ENCODE measurements at regions of chr11 and their contacts with region 1.

Region 1: DNA sequence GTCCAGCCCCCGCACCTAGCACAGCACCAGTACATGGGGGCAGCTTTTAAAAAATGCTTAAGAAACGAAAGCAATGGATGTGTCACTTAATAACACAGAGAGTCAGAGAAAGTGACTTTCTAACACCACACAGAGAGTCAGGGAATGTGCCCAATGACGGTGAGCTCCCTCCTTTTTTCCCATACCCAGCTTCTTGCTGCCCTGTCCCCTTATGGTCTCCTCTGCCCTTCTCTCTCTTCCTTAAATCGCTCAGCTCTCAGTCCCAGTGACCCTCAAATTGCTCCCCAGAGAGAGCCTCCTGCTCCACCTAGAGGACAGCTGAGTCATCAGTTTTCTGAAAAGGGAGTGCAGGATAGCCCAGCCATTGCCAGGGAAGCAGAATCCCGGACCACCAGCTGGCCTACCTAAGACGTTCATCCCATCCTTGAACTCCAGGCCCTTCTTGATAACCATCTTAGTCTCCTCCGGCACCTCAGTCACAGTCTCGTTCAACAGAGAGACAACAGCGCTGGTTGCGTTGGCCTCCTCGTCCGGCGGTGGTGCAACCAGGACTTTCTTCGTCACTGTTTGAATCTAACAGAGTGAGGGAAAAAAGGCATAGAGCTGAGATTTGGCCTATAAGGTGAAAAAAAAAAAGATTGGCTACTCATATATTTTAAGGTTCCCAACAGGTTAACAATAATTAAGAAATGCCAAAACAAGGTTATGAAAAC is 113.5 kb downstream of the SLC1A2 start:
- DNase-seq: peak; percentile 58 to 66 (median 61)
- H3K4me3 ChIP-seq: peak overlapping the region in 1 of 7 experiments; percentile 48
- H3K27ac ChIP-seq: no peak overlapping the region
- H3K4me1 ChIP-seq: peaks cover 6 to 23% (median 14%) of the 10 kb centered on the region in 4 experiments
- H3K27me3 ChIP-seq: no peaks in the 10 kb centered on the region

Region 2: GRCh38 chr11:35260342-35260985 is 45.4 kb before region 1 on chr11:
- CTCF ChIA-PET with region 1: interaction called, 11 read pairs
- POLR2A ChIA-PET with region 1: no interaction called
- DNase-seq: peak in 2 of 3 donors; percentile 57 to 68
- H3K4me3 ChIP-seq: no peak overlapping the region
- H3K27ac ChIP-seq: no peak overlapping the region
- H3K4me1 ChIP-seq: peaks cover 2 to 19% (median 10%) of the 10 kb centered on the region in 4 experiments
- H3K27me3 ChIP-seq: no peaks in the 10 kb centered on the region

Region 3: DNA sequence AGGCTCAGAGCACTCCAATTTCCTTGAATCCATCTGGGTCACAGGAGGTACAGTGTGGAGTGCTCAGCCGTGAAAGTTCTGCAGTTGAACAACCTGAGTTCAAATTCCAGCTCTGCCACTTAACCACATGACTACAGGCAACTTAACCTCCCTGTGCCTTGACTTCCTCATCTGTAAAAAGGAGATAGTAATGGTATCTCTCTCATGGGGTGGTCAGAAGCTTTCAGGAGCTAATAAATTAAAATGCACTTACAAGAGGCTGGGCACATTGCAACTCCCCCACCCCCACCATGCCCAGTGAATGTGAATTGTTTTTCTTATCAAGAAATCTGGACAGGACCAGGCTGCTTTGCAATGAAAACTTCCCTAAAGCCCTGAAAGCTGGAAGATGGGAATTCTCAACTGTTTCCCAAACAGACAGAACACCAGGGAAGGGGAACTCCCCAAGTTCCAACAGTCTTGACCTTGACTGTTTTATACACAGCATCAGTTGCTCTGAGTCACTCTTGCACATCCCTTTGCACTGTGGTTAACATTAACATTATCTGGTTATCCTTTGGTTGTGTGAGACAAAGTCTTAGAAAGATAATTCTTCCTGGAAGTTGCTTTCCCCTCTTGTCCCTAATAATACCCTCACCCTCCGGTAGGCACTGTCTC is 23.5 kb before region 1 on chr11:
- CTCF ChIA-PET with region 1: interaction called, 20 read pairs
- POLR2A ChIA-PET with region 1: no interaction called
- DNase-seq: peak in 2 of 3 donors; percentile 31 to 42
- H3K4me3 ChIP-seq: no peak overlapping the region
- H3K27ac ChIP-seq: no peak overlapping the region
- H3K4me1 ChIP-seq: peaks cover 0 to 6% (median under 1%) of the 10 kb centered on the region in 4 experiments
- H3K27me3 ChIP-seq: no peaks in the 10 kb centered on the region

Region 4: DNA sequence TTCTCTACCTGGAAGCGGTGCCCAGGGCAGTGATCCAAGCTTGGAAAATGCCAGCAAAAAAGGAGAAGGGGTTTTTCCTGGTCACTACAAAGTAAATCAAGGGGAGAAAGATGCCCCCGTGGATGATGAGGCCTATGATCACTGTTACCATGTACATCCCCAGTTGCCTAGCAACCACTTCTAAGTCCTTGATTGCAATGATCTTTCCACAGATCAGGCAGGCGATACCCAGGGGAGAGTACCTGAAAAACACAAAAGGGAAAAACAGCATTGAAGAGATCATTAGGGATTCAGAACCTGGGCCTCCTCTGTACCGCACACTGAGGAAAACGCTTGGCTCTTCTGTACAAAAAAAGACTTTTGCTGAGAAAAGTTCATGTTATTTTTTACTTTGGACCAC is 13.5 kb before region 1 on chr11:
- CTCF ChIA-PET with region 1: interaction called, 48 read pairs
- POLR2A ChIA-PET with region 1: no interaction called
- DNase-seq: no peak
- H3K4me3 ChIP-seq: no peak overlapping the region
- H3K27ac ChIP-seq: no peak overlapping the region
- H3K4me1 ChIP-seq: peaks cover 0 to 14% (median 12%) of the 10 kb centered on the region in 4 experiments
- H3K27me3 ChIP-seq: no peaks in the 10 kb centered on the region

Region 5: DNA sequence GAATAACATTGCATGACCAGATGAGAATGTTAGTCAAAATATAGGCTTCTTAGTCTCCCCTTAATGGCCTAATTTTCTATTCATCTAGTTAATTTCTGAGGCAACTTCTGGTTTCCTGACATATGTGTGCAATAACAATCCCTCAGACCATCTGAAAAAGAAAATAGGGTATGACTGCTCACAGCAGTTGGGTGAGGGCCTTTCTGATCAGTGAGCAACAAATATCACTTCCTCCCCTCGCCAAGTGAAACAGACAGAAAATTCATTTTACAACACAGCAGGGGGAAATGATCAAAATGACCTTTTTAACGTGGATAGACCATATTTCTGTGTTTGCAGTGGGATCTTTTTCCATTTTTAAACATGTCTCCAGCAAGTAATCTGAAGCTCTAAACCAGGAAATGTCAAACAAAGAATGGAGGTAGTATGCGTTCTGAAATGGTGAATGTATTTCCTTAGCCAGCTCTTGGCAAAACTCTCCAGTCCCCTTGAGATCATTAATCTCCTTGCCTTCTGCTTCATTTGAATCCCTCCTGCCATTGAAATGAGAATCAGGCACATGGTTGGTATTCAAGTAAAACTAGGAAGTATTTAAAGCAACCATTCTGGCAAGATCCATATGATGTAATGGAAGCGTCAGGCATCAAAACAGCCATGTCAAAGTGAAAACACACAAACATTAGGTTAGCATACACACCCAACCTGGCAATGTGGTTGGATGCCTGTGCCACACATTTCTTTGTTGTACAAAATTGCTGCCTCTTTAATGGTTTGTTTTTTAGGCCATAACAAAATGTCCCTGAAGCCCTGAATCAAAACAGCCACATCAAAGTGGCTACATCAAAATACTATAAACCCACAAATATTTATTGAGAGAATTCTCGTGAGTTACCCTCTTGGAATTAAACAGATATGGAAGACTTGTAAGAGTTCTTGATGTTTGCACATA is 13.4 kb after region 1 on chr11:
- CTCF ChIA-PET with region 1: interaction called, 13 read pairs
- POLR2A ChIA-PET with region 1: no interaction called
- DNase-seq: peak in 1 of 3 donors; percentile 7
- H3K4me3 ChIP-seq: no peak overlapping the region
- H3K27ac ChIP-seq: no peak overlapping the region
- H3K4me1 ChIP-seq: peaks cover 0 to 6% (median 2%) of the 10 kb centered on the region in 4 experiments
- H3K27me3 ChIP-seq: no peaks in the 10 kb centered on the region

Region 6: DNA sequence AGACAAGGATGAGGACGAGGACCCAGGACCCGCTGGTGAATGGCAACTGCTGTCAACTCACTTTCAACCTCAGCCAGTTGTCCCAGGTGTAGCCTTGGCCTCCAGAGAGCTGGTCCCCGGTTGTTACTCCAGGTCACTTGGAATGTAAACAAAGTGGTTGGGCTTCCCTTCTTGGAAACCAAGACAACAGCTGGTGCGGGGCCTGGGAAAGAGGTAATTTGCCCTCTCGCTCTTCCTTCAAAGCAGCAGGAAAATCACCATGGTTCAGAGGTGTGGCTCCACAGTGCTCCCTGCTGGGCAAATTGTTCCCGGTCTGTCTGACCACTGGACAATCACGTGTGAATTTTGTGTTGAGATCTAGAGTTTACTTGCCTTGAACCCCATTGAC is 98.6 kb after region 1 on chr11:
- CTCF ChIA-PET with region 1: no interaction called
- POLR2A ChIA-PET with region 1: no interaction called
- DNase-seq: no peak
- H3K4me3 ChIP-seq: peak overlapping the region in 1 of 7 experiments; percentile 52
- H3K27ac ChIP-seq: no peak overlapping the region
- H3K4me1 ChIP-seq: no peaks in the 10 kb centered on the region
- H3K27me3 ChIP-seq: peaks cover 0 to 5% (median 0%) of the 10 kb centered on the region in 5 experiments

Measured in common myeloid progenitor, CD34-positive (primary cell).